ENCODE measurements at regions of chr16 and their contacts with region 1.

Region 1: DNA sequence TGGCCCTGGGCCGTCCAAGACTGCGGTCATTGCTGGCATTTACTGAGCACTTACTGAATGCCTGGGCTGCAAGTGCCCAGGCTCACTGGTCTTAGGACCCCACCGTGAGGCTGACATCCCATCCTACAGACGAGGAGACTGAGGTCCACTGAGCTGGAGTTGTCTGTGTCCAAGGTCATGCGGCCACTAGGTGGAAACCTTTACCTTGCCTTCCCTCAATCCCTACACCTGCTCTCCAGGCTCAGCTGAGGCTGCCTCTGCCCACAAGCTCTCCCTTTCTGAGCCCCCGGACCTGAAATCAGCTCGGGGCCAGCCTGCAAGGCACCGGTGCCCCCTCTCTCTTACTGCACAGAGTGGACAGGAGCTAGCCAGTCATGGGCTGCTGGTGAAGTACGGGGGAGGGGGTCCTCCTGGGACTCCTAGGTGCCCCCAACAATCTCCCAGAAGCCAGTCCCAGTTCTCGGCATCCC is 1.5 kb downstream of the CASKIN1 start:
- DNase-seq: peak; percentile 73
- ATAC-seq: peak; percentile 73
- H3K4me3 Mint-ChIP-seq: peak overlapping the region; percentile 66
- H3K27ac Mint-ChIP-seq: no peak overlapping the region
- H3K4me1 Mint-ChIP-seq: peaks cover 4% of the 10 kb centered on the region; the same call in 1 of the 2 replicates
- H3K27me3 Mint-ChIP-seq: peaks cover 27% of the 10 kb centered on the region
- CTCF ChIP-seq: 0 out of 2 replicates have a peak, but pooled peaks have one; percentile 33

Region 2: DNA sequence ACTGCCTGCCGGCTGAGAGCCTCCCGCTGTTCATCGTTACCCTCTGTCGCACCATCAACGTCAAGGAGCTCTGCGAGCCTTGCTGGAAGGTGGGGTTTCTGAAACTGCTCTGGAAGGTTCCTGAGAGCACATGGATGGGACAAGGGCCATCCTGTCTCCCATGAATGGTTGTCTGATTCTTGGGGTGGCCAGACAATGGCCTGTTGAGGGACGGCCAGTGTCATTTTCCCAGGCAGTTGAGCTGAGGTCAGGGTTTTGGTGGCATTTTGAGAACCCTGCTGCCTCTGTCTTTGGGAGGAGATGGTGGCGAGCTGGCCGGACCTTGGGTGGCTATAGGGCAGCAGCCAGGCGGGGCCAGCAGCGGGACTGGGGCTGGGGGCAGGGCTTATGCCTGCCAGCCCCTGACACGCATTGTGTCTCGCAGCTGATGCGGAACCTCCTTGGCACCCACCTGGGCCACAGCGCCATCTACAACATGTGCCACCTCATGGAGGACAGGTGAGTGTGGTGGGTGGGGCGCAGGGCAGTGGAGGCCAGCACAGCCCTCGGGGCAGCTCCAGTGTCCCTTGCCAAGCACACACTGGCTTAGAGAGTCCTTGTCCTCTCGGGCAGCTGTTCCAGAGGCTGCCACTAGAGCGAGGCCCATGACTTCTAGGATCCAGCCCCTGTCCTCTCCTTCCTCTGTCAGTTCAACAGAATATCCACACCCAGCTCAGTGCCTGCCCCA is 138.0 kb before region 1 on chr16:
- CTCF ChIA-PET with region 1: no interaction called
- POLR2A ChIA-PET with region 1: no interaction called
- DNase-seq: no peak
- ATAC-seq: peak; percentile 79
- H3K4me3 Mint-ChIP-seq: no peak overlapping the region
- H3K27ac Mint-ChIP-seq: no peak overlapping the region
- H3K4me1 Mint-ChIP-seq: no peaks in the 10 kb centered on the region
- H3K27me3 Mint-ChIP-seq: no peaks in the 10 kb centered on the region
- CTCF ChIP-seq: no peak

Region 3: GRCh38 chr16:2180962-2181923 is 13.6 kb before region 1 on chr16:
- CTCF ChIA-PET with region 1: interaction called, 24 read pairs
- POLR2A ChIA-PET with region 1: no interaction called
- DNase-seq: peak; percentile 53
- ATAC-seq: peak; percentile 12
- H3K4me3 Mint-ChIP-seq: no peak overlapping the region
- H3K27ac Mint-ChIP-seq: no peak overlapping the region
- H3K4me1 Mint-ChIP-seq: 0 out of 2 replicates have a peak, but pooled peaks cover 3% of the 10 kb centered on the region
- H3K27me3 Mint-ChIP-seq: no peaks in the 10 kb centered on the region
- CTCF ChIP-seq: no peak

Region 4: DNA sequence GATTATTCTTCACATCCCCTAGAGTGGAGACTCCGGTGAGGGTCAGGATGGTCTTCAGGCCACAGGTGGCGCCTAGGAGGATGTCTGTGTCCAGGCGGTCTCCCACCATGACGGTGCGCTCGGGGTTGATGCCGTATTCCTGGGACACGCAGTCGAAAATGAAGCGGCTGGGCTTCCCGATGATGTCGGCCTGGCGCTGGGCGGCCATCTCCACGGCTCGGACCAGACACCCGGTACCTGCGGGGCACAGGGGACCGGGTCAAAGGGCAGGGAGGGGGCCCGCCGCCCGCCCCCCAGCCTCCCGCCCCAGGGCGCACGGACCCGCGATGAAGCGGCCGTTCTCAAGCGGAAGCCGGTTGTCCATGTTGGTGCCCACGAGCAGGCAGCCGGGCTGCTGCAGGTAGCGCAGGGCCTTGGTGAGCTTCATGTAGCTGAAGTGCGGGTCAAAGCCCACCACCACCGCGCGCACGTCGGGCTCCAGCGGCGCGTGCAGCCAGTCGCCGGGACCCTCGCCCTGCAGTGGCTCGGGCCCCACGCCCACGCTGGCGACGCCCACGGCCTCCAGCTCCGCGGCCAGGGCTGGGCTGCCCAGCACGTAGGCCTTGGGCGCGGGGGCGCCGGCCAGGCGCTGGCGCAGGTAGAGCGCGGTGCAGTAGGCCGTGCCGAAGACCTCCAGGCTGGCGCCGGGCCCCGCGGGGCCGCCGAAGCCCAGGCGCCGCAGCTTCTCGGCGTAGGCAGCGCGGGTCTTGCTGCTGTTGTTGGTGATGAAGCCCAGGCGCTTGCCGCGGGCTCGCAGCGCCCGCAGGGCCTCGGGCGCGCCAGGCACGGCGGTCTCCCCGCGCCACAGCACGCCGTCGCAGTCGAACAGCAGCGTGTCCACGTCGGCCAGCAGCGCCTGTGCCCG is 19.2 kb after region 1 on chr16:
- CTCF ChIA-PET with region 1: interaction called, 30 read pairs
- POLR2A ChIA-PET with region 1: interaction called, 5 read pairs
- DNase-seq: no peak
- ATAC-seq: no peak
- H3K4me3 Mint-ChIP-seq: peak overlapping the region; percentile 74
- H3K27ac Mint-ChIP-seq: peak overlapping the region; percentile 32; the same call in 1 of the 2 replicates
- H3K4me1 Mint-ChIP-seq: peaks cover 25% of the 10 kb centered on the region
- H3K27me3 Mint-ChIP-seq: no peaks in the 10 kb centered on the region
- CTCF ChIP-seq: no peak

Region 5: DNA sequence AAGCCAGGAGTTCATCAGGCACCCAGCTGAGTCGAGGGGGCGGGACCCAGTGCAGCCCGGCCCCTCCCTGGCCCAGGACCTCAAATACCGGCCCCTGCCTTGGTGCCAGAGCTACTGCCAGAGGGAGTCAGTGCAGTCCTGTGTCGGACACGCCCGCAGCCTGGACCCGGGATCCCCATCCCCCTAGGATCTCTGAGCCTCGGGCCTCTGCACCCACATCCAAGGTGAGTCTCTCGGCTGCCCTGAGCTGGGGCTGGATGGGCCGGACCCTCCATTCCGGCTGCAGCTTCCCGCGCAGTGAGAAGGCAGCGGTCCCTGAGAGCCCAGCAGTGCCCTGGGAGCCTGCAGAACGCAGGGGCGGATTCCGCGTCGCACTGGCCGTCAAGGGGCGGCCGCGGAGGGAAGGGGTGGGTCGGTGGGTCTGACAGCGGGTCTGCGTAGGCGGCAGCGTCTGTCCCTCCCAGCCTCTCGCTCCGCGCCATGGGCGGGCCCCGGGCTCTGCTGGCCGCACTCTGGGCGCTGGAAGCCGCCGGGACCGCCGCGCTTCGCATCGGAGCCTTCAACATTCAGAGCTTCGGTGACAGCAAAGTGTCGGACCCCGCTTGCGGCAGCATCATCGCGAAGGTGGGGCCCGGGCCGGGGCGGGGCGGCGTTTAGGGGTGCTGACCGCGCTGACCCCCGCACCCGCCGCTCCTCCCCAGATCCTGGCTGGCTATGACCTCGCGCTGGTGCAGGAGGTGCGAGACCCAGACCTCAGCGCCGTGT is 41.6 kb after region 1 on chr16 and contains the start of gene DNASE1L2:
- CTCF ChIA-PET with region 1: interaction called, 51 read pairs
- POLR2A ChIA-PET with region 1: interaction called, 3 read pairs
- DNase-seq: peak; percentile 66
- ATAC-seq: peak; percentile 55
- H3K4me3 Mint-ChIP-seq: peak within 1 kb of the TSS; percentile 55
- H3K27ac Mint-ChIP-seq: no peak within 1 kb of the TSS
- H3K4me1 Mint-ChIP-seq: no peaks in the 10 kb centered on the region
- H3K27me3 Mint-ChIP-seq: peaks cover 16% of the 10 kb centered on the region
- CTCF ChIP-seq: no peak
- total RNA-seq, gene DNASE1L2: 0.66 to 1.1 TPM (median 1.0 TPM) in 3 replicates

Region 6: DNA sequence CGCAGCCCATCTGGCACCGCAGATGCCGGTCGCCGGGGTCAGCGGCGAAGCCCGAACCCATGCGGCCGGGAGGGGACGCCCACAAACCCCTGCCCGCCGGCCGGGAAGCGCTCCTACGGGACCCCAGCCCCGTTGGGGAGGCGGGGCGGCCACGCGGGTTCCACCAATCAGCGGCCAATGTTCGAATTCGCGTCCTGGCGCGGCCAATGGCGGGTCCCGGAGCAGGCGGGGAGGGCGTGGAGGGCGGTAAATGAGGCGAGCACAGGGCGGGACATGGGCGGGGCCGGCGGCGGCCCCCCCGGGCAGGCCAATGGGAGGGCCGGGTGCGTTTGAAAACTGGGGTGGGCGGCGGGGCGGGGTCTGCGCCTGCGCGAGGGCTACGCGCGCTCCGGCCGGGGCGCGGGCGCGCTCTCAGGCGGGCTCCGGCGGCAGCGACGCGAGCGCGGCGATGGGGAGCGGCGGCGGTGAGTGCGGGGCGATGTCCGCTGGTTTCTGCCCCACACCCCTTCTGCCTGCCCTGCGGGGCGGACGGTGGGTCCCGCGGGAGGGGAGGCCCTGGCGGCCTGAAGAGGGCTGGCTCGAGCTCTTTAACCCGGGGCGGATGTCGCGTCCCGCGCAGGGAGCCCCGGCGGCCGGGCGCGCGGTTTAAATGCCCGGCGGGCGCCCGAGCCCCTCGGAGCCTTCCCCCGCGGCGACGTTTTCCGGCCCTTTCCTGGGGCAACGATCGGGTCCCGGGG is 234.3 kb after region 1 on chr16 and contains the start of gene CCNF:
- CTCF ChIA-PET with region 1: interaction called, 10 read pairs
- POLR2A ChIA-PET with region 1: no interaction called
- DNase-seq: peak; percentile 99
- ATAC-seq: peak; percentile 92
- H3K4me3 Mint-ChIP-seq: peak within 1 kb of the TSS; percentile 99
- H3K27ac Mint-ChIP-seq: peak within 1 kb of the TSS; percentile 40
- H3K4me1 Mint-ChIP-seq: peaks cover 23% of the 10 kb centered on the region
- H3K27me3 Mint-ChIP-seq: peaks cover 11% of the 10 kb centered on the region
- CTCF ChIP-seq: no peak
- total RNA-seq, gene CCNF: 53.5 to 65.7 TPM (median 54.7 TPM) in 3 replicates

Region 7: DNA sequence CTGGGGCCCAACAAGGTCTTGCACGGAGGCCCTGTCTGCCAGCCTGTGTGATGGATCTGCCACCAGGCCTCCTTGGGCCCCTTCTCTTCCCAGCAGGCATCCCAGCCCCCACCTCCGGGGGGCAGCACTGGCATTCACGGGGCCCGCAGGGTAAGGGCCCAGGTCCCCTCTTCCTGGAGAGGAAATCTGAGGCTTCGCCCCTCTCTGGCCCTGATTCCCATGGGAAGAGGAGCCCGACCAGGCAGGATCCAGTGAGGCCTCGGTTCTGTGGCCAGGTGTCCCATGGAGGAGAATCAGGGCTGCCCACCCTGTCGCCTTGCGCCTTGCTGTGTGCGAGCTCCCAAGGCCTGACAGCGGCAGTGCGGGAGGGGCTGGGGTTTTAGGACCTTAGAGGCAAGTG is 391.4 kb after region 1 on chr16:
- CTCF ChIA-PET with region 1: no interaction called
- POLR2A ChIA-PET with region 1: no interaction called
- DNase-seq: peak; percentile 60
- ATAC-seq: peak; percentile 81
- H3K4me3 Mint-ChIP-seq: no peak overlapping the region
- H3K27ac Mint-ChIP-seq: peak overlapping the region; percentile 34; the same call in 1 of the 2 replicates
- H3K4me1 Mint-ChIP-seq: no peaks in the 10 kb centered on the region
- H3K27me3 Mint-ChIP-seq: no peaks in the 10 kb centered on the region
- CTCF ChIP-seq: peak; percentile 42; the same call in 1 of the 2 replicates

Measured in WTC11 (cell line).